Left cardiac atrium (tissue), 4 donors: ENCODE measurements at regions of chr5 and their contacts with region 1.

Region 1: DNA sequence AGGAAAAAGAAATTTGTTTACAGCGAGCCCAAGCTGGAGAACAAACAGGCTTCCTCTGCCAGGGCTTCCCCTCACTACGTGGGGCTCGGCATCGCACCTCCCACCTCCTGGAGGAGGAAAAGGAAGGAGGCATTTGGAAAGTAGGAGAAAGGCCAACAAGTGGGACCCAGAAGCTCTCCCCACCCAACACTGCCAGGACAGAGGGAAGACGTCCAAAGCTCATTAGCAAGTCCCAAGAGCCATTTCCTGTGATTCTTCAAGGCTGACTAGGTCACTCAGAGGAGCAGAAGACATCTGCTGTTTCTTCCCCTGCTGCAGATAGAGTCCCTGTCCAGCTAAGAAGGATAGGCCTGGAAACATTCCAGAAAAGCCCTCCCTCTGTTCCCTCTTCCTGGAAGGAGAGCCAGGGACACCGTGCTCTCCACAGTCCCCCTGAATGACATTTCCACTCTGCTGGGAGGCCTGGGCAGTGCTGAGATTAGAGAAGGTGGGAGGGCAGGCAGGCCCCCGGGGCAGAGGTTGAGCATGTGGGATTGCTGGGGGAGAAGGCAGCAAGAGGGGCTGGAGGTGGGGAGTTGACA is 57.0 kb upstream of the NEURL1B start:
- DNase-seq: peak; percentile 67
- ATAC-seq: peak; percentile 73 to 83

Region 2: GRCh38 chr5:172123269-172123692 is 460.7 kb before region 1 on chr5:
- intact Hi-C with region 1: no loop called
- DNase-seq: peak; percentile 86
- ATAC-seq: peak; percentile 89 to 93

Region 3: GRCh38 chr5:172504701-172505402 is 79.2 kb before region 1 on chr5:
- intact Hi-C with region 1: loop called in 1 of 2 experiments (anchors 5 kb)
- DNase-seq: peak; percentile 46
- ATAC-seq: peak; percentile 66 to 71

Region 4: GRCh38 chr5:172764849-172765765 is 181.1 kb after region 1 on chr5:
- intact Hi-C with region 1: no loop called
- DNase-seq: peak; percentile 96
- ATAC-seq: peak; percentile 63 to 76